ENCODE measurements at regions of chr3 and their contacts with region 1.

Region 1: DNA sequence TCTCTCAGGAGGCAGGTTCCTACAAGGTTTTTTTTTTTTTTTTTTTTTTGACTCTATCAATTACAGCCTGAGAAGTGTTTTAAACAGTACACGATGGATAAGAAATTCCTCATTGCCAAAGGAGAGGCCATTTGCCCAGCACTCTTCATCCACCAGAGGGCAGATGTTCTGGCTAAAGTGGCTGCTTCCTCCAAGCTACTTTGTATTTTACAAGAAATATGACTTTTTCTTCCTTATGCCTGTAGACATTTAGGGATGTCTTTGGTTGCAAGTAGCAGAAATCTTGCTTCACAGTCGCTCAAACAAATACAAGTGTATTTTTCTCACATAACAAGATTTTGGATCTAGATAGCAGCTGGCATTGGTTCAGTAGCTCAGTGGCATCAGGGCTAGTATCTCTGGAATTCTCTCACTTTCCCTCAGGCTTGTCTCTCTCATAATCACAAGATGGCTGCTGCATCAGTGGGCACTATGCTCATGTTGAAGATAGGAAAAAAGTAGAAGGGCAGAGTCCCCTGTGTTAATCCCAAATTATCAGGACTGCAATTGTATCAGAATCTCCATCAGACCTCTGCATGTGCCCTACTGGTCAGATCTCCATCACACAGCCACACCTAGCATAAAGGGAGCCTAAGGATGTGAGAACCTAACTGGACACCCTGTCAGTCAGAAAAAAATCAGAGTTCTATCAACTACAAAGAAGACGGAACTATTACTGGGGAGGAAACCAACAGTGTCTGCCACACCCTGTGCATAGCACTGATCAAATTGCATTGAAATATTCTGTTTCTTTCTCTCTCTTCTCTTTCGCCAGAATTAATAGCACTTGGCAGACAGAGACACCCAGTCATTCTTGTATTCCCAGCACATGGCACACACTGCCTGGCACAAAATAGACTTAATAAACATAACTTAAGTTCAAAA is 138.9 kb upstream of the COL8A1 start:
- DNase-seq: peak; percentile 27 to 61
- H3K4me3 ChIP-seq: no peak overlapping the region
- H3K27ac ChIP-seq: no peak overlapping the region
- H3K4me1 ChIP-seq: peaks cover 0 to 9% (median 0%) of the 10 kb centered on the region in 4 donors
- H3K27me3 ChIP-seq: no peaks in the 10 kb centered on the region
- CTCF ChIP-seq: peak in 4 of 7 experiments; percentile 42 to 67 (median 56)
- EP300 ChIP-seq: no peak
- POLR2A ChIP-seq: no peak

Region 2: GRCh38 chr3:99313485-99313884 is 186.0 kb before region 1 on chr3:
- intact Hi-C with region 1: no loop called
- DNase-seq: no peak
- H3K4me3 ChIP-seq: no peak overlapping the region
- H3K27ac ChIP-seq: no peak overlapping the region
- H3K4me1 ChIP-seq: no peaks in the 10 kb centered on the region
- H3K27me3 ChIP-seq: no peaks in the 10 kb centered on the region
- CTCF ChIP-seq: no peak
- EP300 ChIP-seq: no peak
- POLR2A ChIP-seq: no peak

Region 3: GRCh38 chr3:99410789-99411311 is 88.6 kb before region 1 on chr3:
- intact Hi-C with region 1: no loop called
- DNase-seq: no peak
- H3K4me3 ChIP-seq: no peak overlapping the region
- H3K27ac ChIP-seq: no peak overlapping the region
- H3K4me1 ChIP-seq: no peaks in the 10 kb centered on the region
- H3K27me3 ChIP-seq: no peaks in the 10 kb centered on the region
- CTCF ChIP-seq: no peak
- EP300 ChIP-seq: no peak
- POLR2A ChIP-seq: no peak

Region 4: DNA sequence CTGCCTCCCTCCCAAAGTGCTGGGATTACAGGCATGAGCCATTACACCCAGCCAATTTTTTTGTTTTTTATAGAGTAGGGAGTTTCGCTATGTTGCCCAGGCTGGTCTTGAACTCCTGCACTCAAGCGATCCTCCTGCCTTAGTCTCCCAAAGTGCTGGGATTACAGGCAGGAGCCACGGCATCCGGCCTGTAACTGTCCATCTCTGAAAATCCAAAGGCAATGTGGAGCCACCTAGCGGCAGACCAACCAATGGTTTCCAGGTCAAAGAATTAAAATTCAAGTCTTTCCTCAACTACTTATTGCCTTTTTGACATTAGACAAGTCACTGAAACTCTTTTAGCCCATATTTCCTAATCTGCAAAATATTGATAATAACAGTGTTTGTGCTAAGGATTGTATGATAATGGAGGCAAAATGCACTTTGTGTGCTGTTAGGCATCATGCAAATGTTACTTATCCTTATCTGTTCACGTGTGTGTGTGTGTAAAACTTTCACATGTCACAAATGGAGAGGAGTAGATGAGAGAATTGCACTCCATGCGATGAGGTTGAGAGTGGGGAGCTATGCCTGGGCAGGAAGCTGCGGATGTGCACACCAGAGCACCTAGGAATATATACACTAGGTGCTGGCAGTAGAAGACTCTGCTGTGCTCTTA is 187.6 kb after region 1 on chr3:
- intact Hi-C with region 1: loop called (anchors 10 kb)
- DNase-seq: peak; percentile 66 to 70
- H3K4me3 ChIP-seq: no peak overlapping the region
- H3K27ac ChIP-seq: no peak overlapping the region
- H3K4me1 ChIP-seq: no peaks in the 10 kb centered on the region
- H3K27me3 ChIP-seq: no peaks in the 10 kb centered on the region
- CTCF ChIP-seq: peak in 4 of 7 experiments; percentile 50 to 82 (median 64)
- EP300 ChIP-seq: no peak
- POLR2A ChIP-seq: no peak